IMR-90 (cell line): ENCODE measurements at regions of chr11 and their contacts with region 1.

Region 1: GRCh38 chr11:24819006-24819405 is 322.2 kb downstream of the LUZP2 start:
- DNase-seq: no peak
- ATAC-seq: no peak
- H3K4me3 ChIP-seq: no peak overlapping the region
- H3K27ac ChIP-seq: no peak overlapping the region
- H3K4me1 ChIP-seq: no peaks in the 10 kb centered on the region; the same call in 1 of the 2 replicates
- H3K27me3 ChIP-seq: no peaks in the 10 kb centered on the region
- CTCF ChIP-seq: no peak
- POLR2A ChIP-seq: no peak
- RAD21 ChIP-seq: no peak

Region 2: GRCh38 chr11:24859801-24860300 is 40.8 kb after region 1 on chr11:
- CTCF ChIA-PET with region 1: no interaction called
- POLR2A ChIA-PET with region 1: no interaction called
- dilution Hi-C with region 1: no loop called
- in situ Hi-C with region 1: no loop called
- intact Hi-C with region 1: no loop called
- DNase-seq: no peak
- ATAC-seq: no peak
- H3K4me3 ChIP-seq: no peak overlapping the region
- H3K27ac ChIP-seq: no peak overlapping the region
- H3K4me1 ChIP-seq: no peaks in the 10 kb centered on the region
- H3K27me3 ChIP-seq: no peaks in the 10 kb centered on the region
- CTCF ChIP-seq: no peak
- POLR2A ChIP-seq: no peak
- RAD21 ChIP-seq: no peak

Region 3: DNA sequence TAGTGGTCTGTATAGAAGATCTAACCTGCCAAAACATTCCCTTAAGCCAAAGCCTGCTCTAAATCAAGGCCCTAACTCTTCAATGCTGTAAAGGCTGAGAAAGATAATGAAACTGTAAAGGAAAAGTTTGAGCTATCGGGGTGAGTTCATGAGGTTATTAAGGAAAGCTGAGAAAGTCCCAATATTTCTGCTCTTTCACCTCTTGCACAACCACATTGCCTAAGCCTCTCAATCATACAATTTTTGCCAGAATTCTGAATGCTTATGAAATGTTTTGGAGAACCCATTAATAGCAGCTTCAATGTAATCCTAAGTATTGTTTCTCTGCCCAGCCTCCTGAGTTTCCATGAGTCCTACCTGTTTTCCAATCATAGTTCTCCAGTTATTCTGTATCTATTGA is 51.0 kb after region 1 on chr11:
- CTCF ChIA-PET with region 1: no interaction called
- POLR2A ChIA-PET with region 1: no interaction called
- dilution Hi-C with region 1: no loop called
- in situ Hi-C with region 1: no loop called
- intact Hi-C with region 1: loop called (anchors 1 kb)
- DNase-seq: no peak
- ATAC-seq: no peak
- H3K4me3 ChIP-seq: no peak overlapping the region
- H3K27ac ChIP-seq: no peak overlapping the region
- H3K4me1 ChIP-seq: no peaks in the 10 kb centered on the region
- H3K27me3 ChIP-seq: no peaks in the 10 kb centered on the region
- CTCF ChIP-seq: no peak
- POLR2A ChIP-seq: no peak
- RAD21 ChIP-seq: no peak